ENCODE measurements at regions of chr1 and their contacts with region 1.

Region 1: GRCh38 chr1:178451529-178451928 is 45.2 kb downstream of the CLEC20A start:
- DNase-seq: no peak
- ATAC-seq: no peak
- H3K4me3 ChIP-seq: no peak overlapping the region
- H3K27ac ChIP-seq: no peak overlapping the region
- H3K4me1 ChIP-seq: peaks cover 8% of the 10 kb centered on the region; the same call in 1 of the 2 replicates
- H3K27me3 ChIP-seq: no peaks in the 10 kb centered on the region
- CTCF ChIP-seq: no peak
- EP300 ChIP-seq: no peak
- POLR2A ChIP-seq: no peak
- RAD21 ChIP-seq: no peak

Region 2: DNA sequence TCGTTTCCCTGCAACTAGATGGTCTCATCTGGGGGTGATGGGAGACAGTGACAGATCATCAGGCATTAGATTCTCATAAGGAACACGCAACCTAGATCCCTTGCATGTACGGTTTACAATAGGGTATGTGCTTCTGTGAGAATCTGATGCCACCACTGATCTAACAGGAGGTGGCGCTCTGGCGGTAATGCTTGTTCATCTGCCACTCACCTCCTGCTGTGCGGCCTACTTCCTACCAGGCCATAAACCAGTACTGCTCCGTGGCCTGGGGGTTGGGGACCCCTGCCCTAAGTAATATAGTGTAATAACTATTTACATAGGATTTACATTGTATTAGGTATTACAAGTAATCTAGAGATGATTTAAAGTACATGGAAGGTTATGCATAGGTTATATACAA is 89.7 kb before region 1 on chr1:
- CTCF ChIA-PET with region 1: no interaction called
- POLR2A ChIA-PET with region 1: no interaction called
- in situ Hi-C with region 1: no loop called
- intact Hi-C with region 1: loop called (anchors 10 kb)
- DNase-seq: peak; percentile 4
- ATAC-seq: no peak
- H3K4me3 ChIP-seq: no peak overlapping the region
- H3K27ac ChIP-seq: no peak overlapping the region
- H3K4me1 ChIP-seq: peaks cover 7% of the 10 kb centered on the region
- H3K27me3 ChIP-seq: no peaks in the 10 kb centered on the region
- CTCF ChIP-seq: peak; percentile 38
- EP300 ChIP-seq: no peak
- POLR2A ChIP-seq: no peak
- RAD21 ChIP-seq: no peak

Measured in HepG2 (cell line).